ENCODE measurements at regions of chr12 and their contacts with region 1.

Region 1: GRCh38 chr12:50314629-50315312 is 31.5 kb upstream of the LIMA1 start:
- DNase-seq: peak; percentile 54 to 61
- ATAC-seq: peak in 1 of 2 experiments; percentile 68; a peak in 4 of 6 replicates
- H3K4me3 ChIP-seq: no peak overlapping the region
- H3K27ac ChIP-seq: peak overlapping the region in 1 of 2 experiments; percentile 66; a peak in 4 of 6 replicates
- H3K4me1 ChIP-seq: peaks cover 20% of the 10 kb centered on the region
- CTCF ChIP-seq: peak; percentile 78
- EP300 ChIP-seq: no peak
- POLR2A ChIP-seq: no peak
- RAD21 ChIP-seq: peak; percentile 88 to 91

Region 2: DNA sequence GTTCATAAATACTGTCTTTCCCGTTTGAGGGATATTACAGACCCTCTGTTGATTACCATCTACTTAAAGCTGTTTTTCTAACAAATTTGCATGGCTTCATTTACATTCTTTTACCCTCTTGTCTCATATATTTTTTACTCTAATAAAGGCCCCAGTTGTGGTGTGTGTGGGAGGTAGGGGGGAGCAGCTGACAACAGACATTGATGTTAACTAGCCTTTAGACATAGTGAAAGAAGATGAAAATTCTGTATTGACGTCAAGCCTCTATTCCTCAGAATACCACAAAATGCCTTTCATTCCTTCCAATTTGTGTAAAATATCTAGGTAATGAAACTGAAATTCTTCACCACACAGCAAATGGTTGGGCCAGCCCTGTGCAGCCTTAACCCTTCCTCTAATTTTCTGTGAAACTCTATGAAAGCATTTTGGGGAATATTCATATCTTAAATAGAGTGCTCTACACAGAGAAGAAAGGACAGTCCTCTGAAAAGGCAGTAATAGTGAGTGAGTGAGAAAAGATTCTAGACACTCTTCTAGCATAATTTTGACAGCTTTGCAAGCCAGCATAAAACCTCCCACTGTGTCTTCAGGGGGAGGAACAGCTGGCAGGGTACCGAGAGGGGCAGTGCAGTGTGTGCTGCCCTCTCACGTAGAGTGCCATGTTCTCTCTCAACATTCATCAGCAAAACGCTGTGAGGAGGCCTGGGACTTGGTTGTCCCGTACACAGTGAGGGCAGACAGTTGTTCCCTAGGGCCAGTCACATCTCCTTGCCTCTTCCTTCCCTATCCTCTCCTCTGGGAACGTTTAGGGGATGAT is 127.5 kb before region 1 on chr12:
- CTCF ChIA-PET with region 1: interaction called, 82 read pairs
- POLR2A ChIA-PET with region 1: no interaction called
- DNase-seq: no peak
- ATAC-seq: peak in 1 of 2 experiments; percentile 48; a peak in 4 of 6 replicates
- H3K4me3 ChIP-seq: no peak overlapping the region
- H3K27ac ChIP-seq: no peak overlapping the region
- H3K4me1 ChIP-seq: no peaks in the 10 kb centered on the region
- CTCF ChIP-seq: no peak
- EP300 ChIP-seq: no peak
- POLR2A ChIP-seq: no peak
- RAD21 ChIP-seq: no peak

Region 3: DNA sequence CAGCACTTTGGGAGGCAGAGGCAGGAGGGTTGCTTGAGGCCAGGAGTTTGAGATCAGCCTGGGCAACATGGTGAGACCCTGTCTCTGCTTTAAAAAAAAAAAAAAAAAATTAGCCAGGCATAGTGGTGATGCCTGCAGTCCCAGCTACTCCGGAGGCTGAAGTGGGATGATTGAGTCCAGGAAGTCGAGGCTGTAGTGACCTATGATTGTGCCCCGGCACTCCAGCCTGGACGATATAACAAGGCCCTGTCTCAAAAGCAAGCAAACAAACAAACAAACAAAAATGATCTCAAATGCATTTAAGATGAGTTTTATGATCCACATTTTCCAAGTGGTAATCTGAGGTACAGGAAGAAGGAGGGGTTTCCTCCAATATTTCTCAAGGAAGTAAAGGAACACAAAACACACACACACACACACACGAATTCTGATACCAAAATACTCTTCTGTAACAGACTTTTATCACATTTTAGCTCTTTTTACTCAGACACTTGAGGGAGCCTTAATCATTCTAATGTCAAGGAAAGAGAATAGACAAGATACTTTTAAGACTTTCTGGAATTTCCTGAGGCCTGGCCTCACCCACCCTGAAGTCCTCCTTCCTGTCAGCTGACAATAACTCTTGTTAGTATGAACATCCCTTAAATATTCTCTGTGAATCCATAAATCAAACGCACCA is 103.2 kb before region 1 on chr12:
- CTCF ChIA-PET with region 1: interaction called, 32 read pairs
- POLR2A ChIA-PET with region 1: no interaction called
- DNase-seq: peak in 1 of 2 experiments; percentile 54
- ATAC-seq: peak in 1 of 2 experiments; percentile 65; a peak in 3 of 6 replicates
- H3K4me3 ChIP-seq: no peak overlapping the region
- H3K27ac ChIP-seq: peak overlapping the region; percentile 48 to 65; a peak in 5 of 6 replicates
- H3K4me1 ChIP-seq: peaks cover 11% of the 10 kb centered on the region
- CTCF ChIP-seq: peak; percentile 21; the same call in 2 of the 3 replicates
- EP300 ChIP-seq: no peak
- POLR2A ChIP-seq: no peak
- RAD21 ChIP-seq: peak; percentile 39 to 59

Region 4: DNA sequence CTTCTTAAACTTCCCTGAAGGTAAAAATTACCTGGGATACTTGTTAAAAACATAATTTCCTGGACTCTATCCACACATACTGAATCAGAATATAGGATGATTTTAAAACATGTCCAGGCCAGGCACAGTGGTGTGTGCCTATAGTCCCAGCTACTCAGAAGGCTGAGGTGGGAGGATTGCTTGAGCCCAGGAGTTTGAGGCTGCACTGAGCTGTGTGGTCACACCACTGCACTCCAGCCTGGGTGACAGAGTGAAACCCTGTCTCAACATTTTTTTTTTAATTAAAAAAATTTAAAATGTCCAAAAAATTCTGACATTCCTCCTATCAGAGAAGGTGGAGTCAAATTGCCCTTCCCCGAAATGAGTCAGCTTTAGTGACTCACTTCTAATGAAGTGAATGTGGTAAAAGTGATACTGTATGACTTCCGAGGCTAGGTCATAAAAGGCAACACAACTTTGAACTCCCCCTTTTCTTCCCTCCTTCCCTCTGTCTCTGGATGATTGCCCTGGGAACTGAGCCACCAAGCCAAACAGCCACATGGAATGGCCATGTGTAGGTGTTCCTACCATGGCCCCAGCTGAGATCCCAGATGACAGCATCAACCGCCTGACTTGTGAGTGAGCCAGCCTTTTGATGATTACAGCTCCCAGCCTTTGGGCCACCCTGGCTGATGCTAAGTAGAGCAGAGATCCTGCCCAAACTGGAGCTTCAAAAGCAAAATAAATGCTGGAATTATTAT is 67.7 kb before region 1 on chr12:
- CTCF ChIA-PET with region 1: interaction called, 10 read pairs
- POLR2A ChIA-PET with region 1: no interaction called
- DNase-seq: peak; percentile 69 to 86
- ATAC-seq: peak; percentile 84 to 95
- H3K4me3 ChIP-seq: no peak overlapping the region; the same call in 2 of the 3 replicates
- H3K27ac ChIP-seq: peak overlapping the region; percentile 65 to 78
- H3K4me1 ChIP-seq: peaks cover 58% of the 10 kb centered on the region
- CTCF ChIP-seq: no peak
- EP300 ChIP-seq: peak in 1 of 2 experiments; percentile 34; a peak in 2 of 5 replicates
- POLR2A ChIP-seq: no peak
- RAD21 ChIP-seq: no peak

Region 5: GRCh38 chr12:50331745-50332144 is 17.0 kb after region 1 on chr12:
- CTCF ChIA-PET with region 1: interaction called, 10 read pairs
- POLR2A ChIA-PET with region 1: no interaction called
- DNase-seq: no peak
- ATAC-seq: no peak
- H3K4me3 ChIP-seq: no peak overlapping the region
- H3K27ac ChIP-seq: no peak overlapping the region
- H3K4me1 ChIP-seq: peaks cover 14% of the 10 kb centered on the region
- CTCF ChIP-seq: no peak
- EP300 ChIP-seq: no peak
- POLR2A ChIP-seq: no peak
- RAD21 ChIP-seq: no peak

Measured in A549 (cell line).